ENCODE measurements at regions of chr6 and their contacts with region 1.

Region 1: GRCh38 chr6:124869416-124869815 is 92.8 kb upstream of the RNF217 start:
- DNase-seq: no peak
- H3K4me3 ChIP-seq: no peak overlapping the region
- H3K27ac ChIP-seq: no peak overlapping the region
- H3K4me1 ChIP-seq: no peaks in the 10 kb centered on the region
- H3K27me3 ChIP-seq: no peaks in the 10 kb centered on the region
- CTCF ChIP-seq: no peak
- POLR2A ChIP-seq: no peak

Region 2: GRCh38 chr6:124854338-124854922 is 15.0 kb before region 1 on chr6:
- intact Hi-C with region 1: no loop called
- DNase-seq: no peak
- H3K4me3 ChIP-seq: no peak overlapping the region
- H3K27ac ChIP-seq: no peak overlapping the region
- H3K4me1 ChIP-seq: no peaks in the 10 kb centered on the region
- H3K27me3 ChIP-seq: no peaks in the 10 kb centered on the region
- CTCF ChIP-seq: no peak
- POLR2A ChIP-seq: no peak

Region 3: GRCh38 chr6:125001684-125002405 is 132.4 kb after region 1 on chr6:
- intact Hi-C with region 1: no loop called
- DNase-seq: no peak
- H3K4me3 ChIP-seq: no peak overlapping the region
- H3K27ac ChIP-seq: no peak overlapping the region
- H3K4me1 ChIP-seq: peaks cover 14% of the 10 kb centered on the region
- H3K27me3 ChIP-seq: no peaks in the 10 kb centered on the region
- CTCF ChIP-seq: no peak
- POLR2A ChIP-seq: no peak

Region 4: DNA sequence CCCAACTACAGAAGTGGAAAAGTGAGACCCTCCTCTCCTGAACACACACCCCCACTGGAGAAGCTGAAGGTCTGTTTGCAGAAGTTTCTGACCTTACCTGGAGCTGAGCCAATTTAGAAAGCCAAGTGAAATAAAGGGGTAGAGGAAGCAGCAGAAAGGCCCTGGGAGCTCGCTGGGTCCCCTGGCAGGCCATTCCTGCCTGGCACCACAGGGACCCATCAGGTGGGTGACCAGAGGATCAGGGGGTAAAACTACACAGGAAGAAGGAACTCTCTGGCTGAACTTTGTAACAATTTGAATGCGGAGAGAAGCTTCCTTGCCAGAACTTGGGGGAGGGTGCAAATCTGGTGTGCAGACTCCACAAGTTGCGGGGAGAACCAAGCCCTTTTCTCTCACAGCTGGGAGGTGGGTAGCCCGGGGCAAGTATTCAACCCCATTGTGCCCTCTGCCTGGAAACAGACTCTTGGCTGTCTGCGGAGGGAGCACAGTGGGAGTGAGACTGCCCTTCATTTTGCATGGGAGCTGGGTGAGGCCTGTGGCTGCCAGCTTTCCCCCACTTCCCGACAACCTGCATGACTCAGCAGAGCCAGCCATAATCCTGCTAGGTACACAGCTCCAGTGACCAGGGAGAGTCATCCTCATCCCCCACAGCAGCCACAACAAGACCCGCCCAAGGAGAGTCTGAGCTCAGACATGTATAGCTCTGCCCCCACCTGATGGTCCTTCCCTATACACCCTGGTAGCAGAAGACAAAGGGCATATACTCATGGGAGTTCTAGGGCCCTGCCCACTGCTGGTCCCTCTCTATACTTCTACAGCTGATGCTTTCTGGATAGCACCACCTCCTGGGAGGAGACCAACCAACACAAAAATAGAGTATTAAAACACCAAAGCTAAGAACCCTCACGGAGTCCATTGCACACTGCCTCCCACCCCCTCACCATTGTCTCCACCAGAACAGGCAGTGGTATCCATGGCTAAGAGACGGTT is 254.7 kb after region 1 on chr6:
- intact Hi-C with region 1: loop called (anchors 5 kb)
- DNase-seq: no peak
- H3K4me3 ChIP-seq: no peak overlapping the region
- H3K27ac ChIP-seq: no peak overlapping the region
- H3K4me1 ChIP-seq: no peaks in the 10 kb centered on the region
- H3K27me3 ChIP-seq: no peaks in the 10 kb centered on the region
- CTCF ChIP-seq: no peak
- POLR2A ChIP-seq: no peak